Right cardiac atrium (tissue), 5 donors: ENCODE measurements at regions of chrX and their contacts with region 1.

Region 1: DNA sequence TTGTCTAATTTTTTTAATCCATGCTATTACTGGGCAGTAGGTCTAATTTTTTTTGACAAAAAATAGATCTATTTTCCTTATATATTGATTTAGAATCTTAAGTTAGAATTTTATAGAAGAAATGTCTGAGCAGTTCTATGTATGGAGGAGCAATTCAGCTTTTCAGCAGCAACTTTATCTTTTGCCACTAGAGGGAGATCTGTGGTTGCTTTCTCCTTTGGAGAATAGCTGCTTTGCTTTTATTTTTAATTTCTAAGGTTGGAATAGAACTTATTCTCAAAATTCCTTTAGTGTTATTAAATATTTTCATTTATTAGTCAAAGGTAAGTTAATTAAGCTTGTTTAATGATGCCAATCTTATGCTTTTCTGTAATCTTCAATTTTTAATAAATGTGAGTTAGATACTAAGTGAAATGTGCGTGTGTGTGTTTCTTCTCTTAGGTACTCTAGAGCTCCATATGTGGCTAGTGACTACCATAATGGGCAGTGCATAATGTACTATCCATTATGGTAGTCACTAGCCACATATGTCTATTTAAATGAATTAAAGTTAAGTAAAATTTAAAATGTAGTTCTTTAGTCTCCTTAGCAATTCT is 29.3 kb downstream of the FAM199X start:
- DNase-seq: no peak
- ATAC-seq: no peak
- H3K4me3 ChIP-seq: no peak overlapping the region
- H3K27ac ChIP-seq: no peak overlapping the region
- H3K4me1 ChIP-seq: no peaks in the 10 kb centered on the region
- H3K27me3 ChIP-seq: no peaks in the 10 kb centered on the region

Region 2: GRCh38 chrX:104270920-104271512 is 75.4 kb after region 1 on chrX:
- intact Hi-C with region 1: loop called in 1 of 4 experiments (anchors 10 kb)
- DNase-seq: peak in 2 of 3 donors; percentile 26 to 46
- ATAC-seq: peak; percentile 45 to 46
- H3K4me3 ChIP-seq: peak overlapping the region; percentile 31
- H3K27ac ChIP-seq: no peak overlapping the region
- H3K4me1 ChIP-seq: no peaks in the 10 kb centered on the region
- H3K27me3 ChIP-seq: no peaks in the 10 kb centered on the region